GM12878 (cell line): ENCODE measurements at regions of chr10 and their contacts with region 1.

Region 1: GRCh38 chr10:30701451-30702173 is 72.1 kb upstream of the LYZL2 start:
- DNase-seq: peak; percentile 87
- ATAC-seq: peak; percentile 69
- H3K4me3 ChIP-seq: peak overlapping the region; percentile 27; the same call in 1 of the 2 replicates
- H3K27ac ChIP-seq: peak overlapping the region; percentile 99
- H3K4me1 ChIP-seq: peaks cover 43% of the 10 kb centered on the region
- H3K27me3 ChIP-seq: no peaks in the 10 kb centered on the region
- CTCF ChIP-seq: no peak
- EP300 ChIP-seq: peak; percentile 0 to 28; a peak in 2 of 4 replicates
- POLR2A ChIP-seq: peak; percentile 65
- RAD21 ChIP-seq: no peak

Region 2: GRCh38 chr10:30687698-30688219 is 13.9 kb before region 1 on chr10:
- CTCF ChIA-PET with region 1: interaction called, 43 read pairs
- POLR2A ChIA-PET with region 1: no interaction called
- RAD21 ChIA-PET with region 1: interaction called, 9 read pairs
- SMC1A ChIA-PET with region 1: interaction called, 18 read pairs
- in situ Hi-C with region 1: no loop called
- intact Hi-C with region 1: no loop called
- DNase-seq: no peak
- ATAC-seq: peak; percentile 97
- H3K4me3 ChIP-seq: no peak overlapping the region
- H3K27ac ChIP-seq: no peak overlapping the region
- H3K4me1 ChIP-seq: peaks cover 5% of the 10 kb centered on the region; the same call in 1 of the 2 replicates
- H3K27me3 ChIP-seq: no peaks in the 10 kb centered on the region
- CTCF ChIP-seq: peak; percentile 88 to 93 (median 89)
- EP300 ChIP-seq: no peak
- POLR2A ChIP-seq: no peak
- RAD21 ChIP-seq: peak; percentile 90

Region 3: DNA sequence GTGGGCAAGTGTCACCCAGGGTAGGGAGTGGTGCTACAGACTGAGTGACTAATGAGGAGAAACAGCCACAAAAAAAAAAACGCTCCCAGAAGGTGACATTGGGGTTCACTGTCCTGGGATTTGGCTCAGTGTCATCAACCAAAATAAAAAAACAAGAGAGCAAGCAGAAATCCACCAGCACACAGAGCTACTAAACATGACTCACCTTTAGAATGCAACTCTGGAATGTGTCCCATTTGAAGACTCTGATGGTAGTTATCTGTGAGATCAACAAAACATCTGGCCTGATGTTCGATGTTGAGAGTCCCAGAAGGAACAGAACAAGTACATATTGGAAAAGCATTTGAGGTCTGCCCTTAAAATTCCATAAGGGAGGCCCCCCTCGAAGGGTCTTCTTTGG is 128.3 kb after region 1 on chr10:
- CTCF ChIA-PET with region 1: no interaction called
- POLR2A ChIA-PET with region 1: no interaction called
- RAD21 ChIA-PET with region 1: no interaction called
- SMC1A ChIA-PET with region 1: no interaction called
- in situ Hi-C with region 1: no loop called
- intact Hi-C with region 1: no loop called
- DNase-seq: no peak
- ATAC-seq: no peak
- H3K4me3 ChIP-seq: no peak overlapping the region
- H3K27ac ChIP-seq: no peak overlapping the region
- H3K4me1 ChIP-seq: no peaks in the 10 kb centered on the region
- H3K27me3 ChIP-seq: no peaks in the 10 kb centered on the region
- CTCF ChIP-seq: no peak
- EP300 ChIP-seq: no peak
- POLR2A ChIP-seq: no peak
- RAD21 ChIP-seq: no peak